ENCODE measurements at regions of chr1 and their contacts with region 1.

Region 1: GRCh38 chr1:167442124-167442848 is 76.0 kb downstream of the CD247 start:
- DNase-seq: peak; percentile 84
- ATAC-seq: peak; percentile 92
- H3K4me3 ChIP-seq: no peak overlapping the region
- H3K4me3 Mint-ChIP-seq: peak overlapping the region; percentile 37
- H3K27ac ChIP-seq: no peak overlapping the region
- H3K27ac Mint-ChIP-seq: no peak overlapping the region
- H3K4me1 ChIP-seq: peaks cover 25 to 29% of the 10 kb centered on the region in 2 donors
- H3K4me1 Mint-ChIP-seq: peaks cover 35% of the 10 kb centered on the region
- H3K27me3 ChIP-seq: peaks cover 0 to 20% (median 3%) of the 10 kb centered on the region in 4 experiments
- H3K27me3 Mint-ChIP-seq: peaks cover 5% of the 10 kb centered on the region
- CTCF ChIP-seq: peak; percentile 93

Region 2: DNA sequence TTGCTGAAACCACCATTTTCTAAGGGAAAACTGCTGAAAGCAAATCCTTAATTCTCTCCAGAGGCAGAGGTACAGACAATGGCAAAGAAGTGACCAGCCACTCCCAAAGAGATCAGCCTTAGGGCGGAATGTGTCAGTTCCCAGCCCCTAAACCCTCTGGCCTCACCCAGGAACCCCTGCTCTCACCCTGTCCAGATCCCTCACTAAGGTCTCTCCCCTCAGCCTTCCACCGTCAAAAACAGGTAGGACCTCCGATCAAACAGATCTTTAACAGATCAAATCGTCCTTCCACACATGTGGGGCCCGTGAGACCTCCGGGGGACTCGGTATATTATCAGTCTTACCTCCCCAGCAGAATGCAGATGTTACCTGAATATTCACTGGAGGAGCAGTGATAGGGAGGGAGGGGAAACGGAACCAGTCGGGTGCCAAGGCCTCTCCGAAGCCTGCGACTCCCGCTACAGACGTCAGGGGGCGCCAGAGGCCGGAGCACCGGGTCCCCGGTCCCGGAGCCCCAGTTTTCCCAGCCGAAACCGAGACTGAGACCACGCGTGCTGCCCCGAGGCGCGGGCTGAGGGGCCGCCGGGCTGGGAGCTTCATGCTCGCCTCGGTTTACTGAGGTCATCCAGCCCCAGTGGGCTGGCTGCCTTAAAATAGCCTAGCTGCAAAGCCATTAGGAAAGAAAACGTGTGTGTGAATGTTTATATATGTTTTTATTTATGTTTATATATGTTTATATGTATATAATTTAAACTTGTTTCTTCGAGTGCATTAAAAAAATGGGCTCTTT is 375.8 kb before region 1 on chr1:
- CTCF ChIA-PET with region 1: interaction called, 25 read pairs
- POLR2A ChIA-PET with region 1: no interaction called
- intact Hi-C with region 1: loop called (anchors 1 kb)
- DNase-seq: peak; percentile 83
- ATAC-seq: peak; percentile 99
- H3K4me3 ChIP-seq: peak overlapping the region in 1 of 5 experiments; percentile 20
- H3K4me3 Mint-ChIP-seq: no peak overlapping the region
- H3K27ac ChIP-seq: no peak overlapping the region
- H3K27ac Mint-ChIP-seq: no peak overlapping the region
- H3K4me1 ChIP-seq: peaks cover 0 to 7% of the 10 kb centered on the region in 2 donors
- H3K4me1 Mint-ChIP-seq: peaks cover 4% of the 10 kb centered on the region
- H3K27me3 ChIP-seq: no peaks in the 10 kb centered on the region
- H3K27me3 Mint-ChIP-seq: no peaks in the 10 kb centered on the region
- CTCF ChIP-seq: peak; percentile 98

Region 3: DNA sequence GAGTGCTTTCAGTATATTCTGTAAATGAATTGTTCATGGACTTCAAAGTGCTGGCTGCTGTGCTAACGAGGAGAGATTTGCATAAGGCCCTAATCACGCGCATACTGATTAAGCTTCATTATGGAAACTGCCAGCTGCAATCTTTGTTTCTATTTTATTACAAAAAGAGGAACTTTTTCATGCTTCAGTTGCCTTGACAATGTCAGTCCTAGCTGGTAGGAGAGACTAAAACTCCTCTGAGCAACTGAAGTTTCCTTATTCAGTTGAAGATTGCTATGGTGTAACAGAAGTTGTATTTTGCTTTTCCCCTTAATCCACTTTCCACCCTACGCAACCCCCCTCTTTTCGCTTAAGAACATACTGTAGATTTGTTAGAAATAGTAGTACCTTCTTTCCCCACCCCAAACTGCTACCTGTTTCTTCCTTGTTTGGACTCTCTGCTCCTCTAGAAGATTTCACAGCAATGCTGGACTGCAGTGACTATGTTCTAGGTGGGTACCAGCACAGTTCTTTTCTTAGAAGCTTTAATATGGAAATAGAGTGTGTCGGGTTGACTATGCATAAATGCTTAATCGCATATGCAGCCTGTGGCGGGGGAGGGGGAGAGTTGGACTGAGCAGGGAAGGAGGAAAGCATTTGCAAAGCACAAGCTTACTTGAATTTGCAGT is 113.3 kb before region 1 on chr1:
- CTCF ChIA-PET with region 1: interaction called, 5 read pairs
- POLR2A ChIA-PET with region 1: no interaction called
- intact Hi-C with region 1: loop called (anchors 10 kb)
- DNase-seq: peak; percentile 88
- ATAC-seq: peak; percentile 86
- H3K4me3 ChIP-seq: peak overlapping the region; percentile 46 to 67 (median 62)
- H3K4me3 Mint-ChIP-seq: peak overlapping the region; percentile 78
- H3K27ac ChIP-seq: peak overlapping the region; percentile 85 to 86
- H3K27ac Mint-ChIP-seq: peak overlapping the region; percentile 91
- H3K4me1 ChIP-seq: peaks cover 36 to 54% of the 10 kb centered on the region in 2 donors
- H3K4me1 Mint-ChIP-seq: peaks cover 59% of the 10 kb centered on the region
- H3K27me3 ChIP-seq: no peaks in the 10 kb centered on the region
- H3K27me3 Mint-ChIP-seq: no peaks in the 10 kb centered on the region
- CTCF ChIP-seq: no peak

Region 4: DNA sequence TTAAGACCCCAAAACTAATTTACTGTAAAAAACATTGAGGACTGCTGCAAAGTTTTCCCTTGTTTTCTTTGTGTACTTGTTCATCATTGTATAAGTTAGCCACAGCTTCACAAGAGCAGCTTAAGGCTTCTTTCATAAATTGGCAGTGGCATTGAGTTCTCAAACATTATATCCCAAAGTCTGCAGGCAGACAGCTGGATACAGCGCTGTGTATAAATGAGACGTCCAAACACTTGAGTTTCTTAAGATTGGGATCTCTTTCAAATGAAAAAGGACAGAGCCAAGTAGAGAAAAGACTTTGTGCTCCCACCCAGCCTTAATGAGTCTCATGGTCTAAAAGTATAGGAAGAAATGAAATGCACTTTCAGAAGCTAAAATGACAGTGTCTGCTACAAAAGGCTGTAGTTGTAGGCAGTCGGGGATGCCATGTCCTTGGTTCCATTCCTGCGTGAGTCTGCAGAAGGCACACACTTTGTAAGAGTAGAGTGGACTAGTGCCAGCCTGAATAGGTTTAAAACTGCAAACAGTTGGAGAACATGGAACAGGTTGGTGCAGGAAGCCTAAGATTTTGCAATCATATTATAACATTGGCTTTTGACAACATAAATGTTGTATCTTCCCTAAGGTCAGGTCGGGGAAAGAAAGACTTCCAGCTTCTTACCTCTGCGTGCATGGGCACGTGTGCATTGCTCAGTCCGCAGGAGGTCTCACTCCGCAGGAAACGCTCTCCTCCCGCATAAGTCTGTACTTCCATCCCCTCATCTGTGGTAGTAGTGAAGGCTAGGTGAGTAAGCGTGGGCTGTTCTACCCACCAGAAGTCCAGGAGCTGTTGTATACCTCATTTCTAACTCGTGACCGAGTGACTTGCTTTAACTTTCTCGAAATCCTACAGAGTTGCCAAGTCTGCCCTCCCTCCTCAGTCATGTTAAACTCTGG is 18.3 kb before region 1 on chr1:
- CTCF ChIA-PET with region 1: interaction called, 51 read pairs
- POLR2A ChIA-PET with region 1: no interaction called
- intact Hi-C with region 1: no loop called
- DNase-seq: no peak
- ATAC-seq: no peak
- H3K4me3 ChIP-seq: no peak overlapping the region
- H3K4me3 Mint-ChIP-seq: no peak overlapping the region
- H3K27ac ChIP-seq: no peak overlapping the region
- H3K27ac Mint-ChIP-seq: no peak overlapping the region
- H3K4me1 ChIP-seq: peaks cover 0 to 1% of the 10 kb centered on the region in 2 donors
- H3K4me1 Mint-ChIP-seq: peaks cover 4% of the 10 kb centered on the region
- H3K27me3 ChIP-seq: no peaks in the 10 kb centered on the region
- H3K27me3 Mint-ChIP-seq: no peaks in the 10 kb centered on the region
- CTCF ChIP-seq: no peak

Region 5: DNA sequence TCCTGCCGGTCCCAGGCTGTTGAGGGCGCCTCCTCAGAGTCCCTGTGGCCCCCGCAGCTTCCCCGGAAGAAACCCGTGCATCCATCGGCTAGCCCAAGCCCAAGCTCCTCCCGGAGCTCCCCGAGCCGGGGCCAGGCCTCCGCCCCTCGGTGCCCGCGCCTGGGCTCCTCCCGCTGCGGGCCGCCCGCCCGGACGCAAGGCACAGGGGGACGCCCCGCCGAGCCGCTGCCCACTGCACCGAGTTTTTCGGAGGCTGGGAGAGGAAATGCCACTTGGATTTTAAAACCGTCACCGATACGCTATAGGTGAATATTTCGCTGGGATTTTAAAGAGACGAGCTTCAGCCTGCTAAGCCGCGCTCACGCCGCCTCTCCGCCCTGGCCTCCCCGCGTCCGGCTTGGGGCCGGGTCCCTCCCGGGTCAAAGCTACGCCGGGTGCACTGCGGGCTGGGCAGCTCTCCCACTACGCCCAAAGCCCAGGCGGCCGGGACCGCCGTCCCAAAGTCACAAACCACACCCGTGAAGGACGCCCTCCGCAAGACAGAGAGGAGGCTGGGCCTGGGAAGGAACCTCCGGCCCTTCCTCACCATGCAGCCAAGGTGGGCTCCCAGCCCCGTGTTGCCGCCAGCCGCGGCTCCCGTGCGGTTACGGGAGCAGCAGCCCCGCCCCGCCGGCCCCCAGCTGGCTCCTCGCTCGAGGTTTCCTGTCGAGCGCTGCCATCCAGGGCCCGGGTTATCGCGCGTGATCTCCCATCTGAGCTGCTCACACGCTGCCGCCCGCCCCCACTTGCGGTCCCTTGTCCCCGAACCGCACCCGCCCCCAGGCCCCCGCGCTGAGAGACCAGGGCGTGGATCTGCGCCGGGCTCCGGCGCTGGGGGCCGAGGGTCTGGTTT is 12.9 kb after region 1 on chr1:
- CTCF ChIA-PET with region 1: interaction called, 25 read pairs
- POLR2A ChIA-PET with region 1: no interaction called
- intact Hi-C with region 1: loop called (anchors 1 kb)
- DNase-seq: peak; percentile 78
- ATAC-seq: peak; percentile 78
- H3K4me3 ChIP-seq: peak overlapping the region; percentile 50 to 82 (median 77)
- H3K4me3 Mint-ChIP-seq: peak overlapping the region; percentile 79
- H3K27ac ChIP-seq: peak overlapping the region in 1 of 2 donors; percentile 66
- H3K27ac Mint-ChIP-seq: no peak overlapping the region
- H3K4me1 ChIP-seq: peaks cover 3 to 23% of the 10 kb centered on the region in 2 donors
- H3K4me1 Mint-ChIP-seq: peaks cover 14% of the 10 kb centered on the region
- H3K27me3 ChIP-seq: peaks cover 0 to 6% (median 0%) of the 10 kb centered on the region in 4 experiments
- H3K27me3 Mint-ChIP-seq: peaks cover 4% of the 10 kb centered on the region
- CTCF ChIP-seq: no peak

Measured in B cell (primary cell).